B cell (primary cell): ENCODE measurements at regions of chr12 and their contacts with region 1.

Region 1: GRCh38 chr12:42568952-42569915 is 20.3 kb downstream of the PRICKLE1 start:
- DNase-seq: peak; percentile 72
- ATAC-seq: no peak
- H3K4me3 ChIP-seq: no peak overlapping the region
- H3K4me3 Mint-ChIP-seq: no peak overlapping the region
- H3K27ac ChIP-seq: no peak overlapping the region
- H3K27ac Mint-ChIP-seq: no peak overlapping the region
- H3K4me1 ChIP-seq: no peaks in the 10 kb centered on the region
- H3K4me1 Mint-ChIP-seq: peaks cover 5% of the 10 kb centered on the region
- H3K27me3 ChIP-seq: no peaks in the 10 kb centered on the region
- H3K27me3 Mint-ChIP-seq: no peaks in the 10 kb centered on the region
- CTCF ChIP-seq: peak; percentile 79

Region 2: GRCh38 chr12:41264281-41264680 is 1305.0 kb before region 1 on chr12:
- CTCF ChIA-PET with region 1: interaction called, 3 read pairs
- POLR2A ChIA-PET with region 1: no interaction called
- intact Hi-C with region 1: loop called (anchors 5 kb)
- DNase-seq: peak; percentile 8
- ATAC-seq: no peak
- H3K4me3 ChIP-seq: no peak overlapping the region
- H3K4me3 Mint-ChIP-seq: no peak overlapping the region
- H3K27ac ChIP-seq: no peak overlapping the region
- H3K27ac Mint-ChIP-seq: no peak overlapping the region
- H3K4me1 ChIP-seq: no peaks in the 10 kb centered on the region
- H3K4me1 Mint-ChIP-seq: no peaks in the 10 kb centered on the region
- H3K27me3 ChIP-seq: no peaks in the 10 kb centered on the region
- H3K27me3 Mint-ChIP-seq: peaks cover 3% of the 10 kb centered on the region
- CTCF ChIP-seq: peak; percentile 35

Region 3: DNA sequence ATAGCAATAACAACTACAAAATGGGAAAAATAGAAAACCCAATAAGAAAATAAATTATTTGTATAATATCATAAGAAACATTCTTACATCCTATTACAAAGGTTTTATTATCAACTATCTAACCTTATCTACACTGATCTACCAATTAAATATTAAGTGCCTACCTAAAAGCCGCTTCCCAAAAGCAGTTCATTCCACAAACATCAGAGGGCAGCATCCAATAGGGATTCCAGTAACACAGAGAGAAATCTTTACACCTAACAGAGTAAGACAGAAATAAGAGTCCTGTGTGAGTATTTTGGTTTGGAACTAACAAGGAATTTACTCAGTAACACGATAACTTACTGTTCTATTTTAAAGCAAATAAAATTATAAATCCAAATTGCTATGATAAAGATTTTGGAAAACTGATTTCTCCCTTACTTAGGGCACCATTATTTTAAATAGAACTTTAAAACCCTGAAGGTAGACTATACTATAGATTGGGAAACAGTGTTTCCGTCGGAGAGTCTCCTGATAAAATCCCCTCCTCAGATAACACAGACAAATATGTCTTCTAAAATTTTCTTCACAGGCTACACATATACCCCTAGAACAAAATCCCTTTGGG is 439.5 kb before region 1 on chr12:
- CTCF ChIA-PET with region 1: interaction called, 9 read pairs
- POLR2A ChIA-PET with region 1: no interaction called
- intact Hi-C with region 1: loop called (anchors 5 kb)
- DNase-seq: peak; percentile 57
- ATAC-seq: no peak
- H3K4me3 ChIP-seq: no peak overlapping the region
- H3K4me3 Mint-ChIP-seq: no peak overlapping the region
- H3K27ac ChIP-seq: no peak overlapping the region
- H3K27ac Mint-ChIP-seq: no peak overlapping the region
- H3K4me1 ChIP-seq: peaks cover 8 to 12% of the 10 kb centered on the region in 2 donors
- H3K4me1 Mint-ChIP-seq: peaks cover 33% of the 10 kb centered on the region
- H3K27me3 ChIP-seq: no peaks in the 10 kb centered on the region
- H3K27me3 Mint-ChIP-seq: no peaks in the 10 kb centered on the region
- CTCF ChIP-seq: peak; percentile 71

Region 4: GRCh38 chr12:42332301-42333285 is 236.6 kb before region 1 on chr12:
- CTCF ChIA-PET with region 1: interaction called, 6 read pairs
- POLR2A ChIA-PET with region 1: no interaction called
- intact Hi-C with region 1: loop called (anchors 1 kb)
- DNase-seq: peak; percentile 62
- ATAC-seq: peak; percentile 45
- H3K4me3 ChIP-seq: no peak overlapping the region
- H3K4me3 Mint-ChIP-seq: no peak overlapping the region
- H3K27ac ChIP-seq: peak overlapping the region in 1 of 2 donors; percentile 6
- H3K27ac Mint-ChIP-seq: no peak overlapping the region
- H3K4me1 ChIP-seq: peaks cover 20 to 23% of the 10 kb centered on the region in 2 donors
- H3K4me1 Mint-ChIP-seq: peaks cover 57% of the 10 kb centered on the region
- H3K27me3 ChIP-seq: no peaks in the 10 kb centered on the region
- H3K27me3 Mint-ChIP-seq: no peaks in the 10 kb centered on the region
- CTCF ChIP-seq: peak; percentile 79

Region 5: DNA sequence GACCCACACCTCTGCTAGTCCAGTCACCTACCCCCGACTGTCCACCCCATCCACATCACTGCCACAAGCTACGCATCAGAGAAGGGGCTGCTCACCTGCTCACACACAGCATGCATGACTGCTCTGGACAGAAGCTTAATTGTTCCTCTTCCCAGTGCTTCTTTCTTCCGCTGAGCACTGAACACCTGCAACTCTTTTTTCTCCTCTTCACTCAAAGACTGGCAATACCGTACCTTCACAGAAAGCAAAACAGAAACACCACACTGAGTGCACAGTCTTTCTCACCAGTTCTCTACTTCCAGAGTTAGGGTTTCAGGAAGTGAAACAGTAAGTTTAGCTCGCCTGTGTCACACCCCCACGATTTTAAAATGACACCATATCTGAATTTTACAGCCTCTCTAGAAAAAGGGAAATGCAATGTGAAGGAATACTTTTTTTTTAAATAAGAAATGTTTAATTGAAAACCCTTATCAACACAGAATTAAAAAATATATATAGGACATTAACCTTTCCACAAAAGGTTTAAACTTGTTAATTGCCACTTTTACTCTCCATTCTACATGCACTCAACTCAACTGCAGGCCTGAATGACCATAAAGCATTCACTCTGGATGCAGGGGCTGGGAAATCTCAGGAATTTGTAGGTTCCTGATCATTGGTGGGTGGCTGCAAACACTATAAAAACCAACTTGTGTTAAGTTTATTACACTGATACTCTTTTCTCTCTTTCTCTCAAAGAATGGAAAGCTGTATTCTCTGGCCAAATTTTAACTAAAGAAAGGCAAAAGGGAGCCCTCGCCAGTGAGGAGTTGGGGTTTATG is 99.7 kb before region 1 on chr12:
- CTCF ChIA-PET with region 1: interaction called, 13 read pairs
- POLR2A ChIA-PET with region 1: no interaction called
- intact Hi-C with region 1: no loop called
- DNase-seq: peak; percentile 93
- ATAC-seq: peak; percentile 91
- H3K4me3 ChIP-seq: peak overlapping the region; percentile 23 to 45 (median 33)
- H3K4me3 Mint-ChIP-seq: peak overlapping the region; percentile 81
- H3K27ac ChIP-seq: peak overlapping the region; percentile 81 to 87
- H3K27ac Mint-ChIP-seq: peak overlapping the region; percentile 93
- H3K4me1 ChIP-seq: peaks cover 69 to 78% of the 10 kb centered on the region in 2 donors
- H3K4me1 Mint-ChIP-seq: peaks cover 76% of the 10 kb centered on the region
- H3K27me3 ChIP-seq: no peaks in the 10 kb centered on the region
- H3K27me3 Mint-ChIP-seq: no peaks in the 10 kb centered on the region
- CTCF ChIP-seq: no peak

Region 6: GRCh38 chr12:42584651-42585111 is 15.4 kb after region 1 on chr12:
- CTCF ChIA-PET with region 1: interaction called, 14 read pairs
- POLR2A ChIA-PET with region 1: no interaction called
- intact Hi-C with region 1: no loop called
- DNase-seq: no peak
- ATAC-seq: no peak
- H3K4me3 ChIP-seq: no peak overlapping the region
- H3K4me3 Mint-ChIP-seq: no peak overlapping the region
- H3K27ac ChIP-seq: no peak overlapping the region
- H3K27ac Mint-ChIP-seq: no peak overlapping the region
- H3K4me1 ChIP-seq: peaks cover 10 to 11% of the 10 kb centered on the region in 2 donors
- H3K4me1 Mint-ChIP-seq: peaks cover 11% of the 10 kb centered on the region
- H3K27me3 ChIP-seq: peaks cover 0 to 31% (median 21%) of the 10 kb centered on the region in 4 experiments
- H3K27me3 Mint-ChIP-seq: peaks cover 38% of the 10 kb centered on the region
- CTCF ChIP-seq: no peak